ENCODE measurements at regions of chr10 and their contacts with region 1.

Region 1: GRCh38 chr10:123132576-123133477 is 2.9 kb upstream of the HMX3 start:
- DNase-seq: peak; percentile 63 to 84 (median 79)
- ATAC-seq: peak; percentile 85
- H3K4me3 ChIP-seq: peak overlapping the region; percentile 36
- H3K4me3 Mint-ChIP-seq: peak overlapping the region; percentile 39 to 79 (median 72)
- H3K27ac ChIP-seq: no peak overlapping the region
- H3K27ac Mint-ChIP-seq: peak overlapping the region in 4 of 9 donors; percentile 5 to 82 (median 42)
- H3K4me1 ChIP-seq: peaks cover 20 to 42% of the 10 kb centered on the region in 2 donors
- H3K4me1 Mint-ChIP-seq: peaks cover 6 to 32% (median 26%) of the 10 kb centered on the region in 7 donors
- H3K27me3 ChIP-seq: peaks cover 16 to 37% of the 10 kb centered on the region in 2 donors
- H3K27me3 Mint-ChIP-seq: peaks cover 62 to 82% (median 68%) of the 10 kb centered on the region in 5 donors

Region 2: GRCh38 chr10:122648599-122649428 is 484.0 kb before region 1 on chr10:
- CTCF ChIA-PET with region 1: no interaction called
- POLR2A ChIA-PET with region 1: no interaction called
- intact Hi-C with region 1: loop called in 1 of 2 experiments (anchors 5 kb)
- DNase-seq: peak in 1 of 9 donors; percentile 9
- ATAC-seq: peak; percentile 32
- H3K4me3 ChIP-seq: no peak overlapping the region
- H3K4me3 Mint-ChIP-seq: no peak overlapping the region
- H3K27ac ChIP-seq: no peak overlapping the region
- H3K27ac Mint-ChIP-seq: no peak overlapping the region
- H3K4me1 ChIP-seq: no peaks in the 10 kb centered on the region
- H3K4me1 Mint-ChIP-seq: no peaks in the 10 kb centered on the region
- H3K27me3 ChIP-seq: no peaks in the 10 kb centered on the region
- H3K27me3 Mint-ChIP-seq: peaks cover 14 to 49% (median 16%) of the 10 kb centered on the region in 5 donors

Region 3: GRCh38 chr10:123043409-123043925 is 89.4 kb before region 1 on chr10:
- CTCF ChIA-PET with region 1: interaction called, 5 read pairs
- POLR2A ChIA-PET with region 1: no interaction called
- intact Hi-C with region 1: loop called (anchors 1 kb)
- DNase-seq: peak in 8 of 9 donors; percentile 11 to 50 (median 36)
- ATAC-seq: peak; percentile 70
- H3K4me3 ChIP-seq: no peak overlapping the region
- H3K4me3 Mint-ChIP-seq: no peak overlapping the region
- H3K27ac ChIP-seq: no peak overlapping the region
- H3K27ac Mint-ChIP-seq: no peak overlapping the region
- H3K4me1 ChIP-seq: no peaks in the 10 kb centered on the region
- H3K4me1 Mint-ChIP-seq: peaks cover 0 to 10% (median 6%) of the 10 kb centered on the region in 7 donors
- H3K27me3 ChIP-seq: no peaks in the 10 kb centered on the region
- H3K27me3 Mint-ChIP-seq: no peaks in the 10 kb centered on the region

Region 4: GRCh38 chr10:123147635-123148413 is 15.0 kb after region 1 on chr10 and contains the start of gene HMX2:
- CTCF ChIA-PET with region 1: interaction called, 3 read pairs
- POLR2A ChIA-PET with region 1: interaction called, 3 read pairs
- intact Hi-C with region 1: loop called (anchors 1 kb)
- DNase-seq: peak in 2 of 9 donors; percentile 37 to 40
- ATAC-seq: peak; percentile 30
- H3K4me3 ChIP-seq: peak within 1 kb of the TSS; percentile 52
- H3K4me3 Mint-ChIP-seq: peak within 1 kb of the TSS; percentile 62 to 91 (median 89)
- H3K27ac ChIP-seq: no peak within 1 kb of the TSS
- H3K27ac Mint-ChIP-seq: peak within 1 kb of the TSS in 5 of 9 donors; percentile 15 to 66 (median 43)
- H3K4me1 ChIP-seq: peaks cover 33 to 79% of the 10 kb centered on the region in 2 donors
- H3K4me1 Mint-ChIP-seq: peaks cover 25 to 77% (median 62%) of the 10 kb centered on the region in 7 donors
- H3K27me3 ChIP-seq: peaks cover 25 to 48% of the 10 kb centered on the region in 2 donors
- H3K27me3 Mint-ChIP-seq: peaks cover 50 to 82% (median 54%) of the 10 kb centered on the region in 5 donors
- total RNA-seq, gene HMX2: not detected

Region 5: GRCh38 chr10:123165445-123166072 is 32.7 kb after region 1 on chr10:
- CTCF ChIA-PET with region 1: no interaction called
- POLR2A ChIA-PET with region 1: no interaction called
- intact Hi-C with region 1: no loop called
- DNase-seq: no peak
- ATAC-seq: no peak
- H3K4me3 ChIP-seq: no peak overlapping the region
- H3K4me3 Mint-ChIP-seq: no peak overlapping the region
- H3K27ac ChIP-seq: no peak overlapping the region
- H3K27ac Mint-ChIP-seq: peak overlapping the region in 4 of 9 donors; percentile 14 to 50 (median 35)
- H3K4me1 ChIP-seq: peaks cover 13 to 16% of the 10 kb centered on the region in 2 donors
- H3K4me1 Mint-ChIP-seq: peaks cover 8 to 56% (median 40%) of the 10 kb centered on the region in 7 donors
- H3K27me3 ChIP-seq: no peaks in the 10 kb centered on the region
- H3K27me3 Mint-ChIP-seq: no peaks in the 10 kb centered on the region

Region 6: DNA sequence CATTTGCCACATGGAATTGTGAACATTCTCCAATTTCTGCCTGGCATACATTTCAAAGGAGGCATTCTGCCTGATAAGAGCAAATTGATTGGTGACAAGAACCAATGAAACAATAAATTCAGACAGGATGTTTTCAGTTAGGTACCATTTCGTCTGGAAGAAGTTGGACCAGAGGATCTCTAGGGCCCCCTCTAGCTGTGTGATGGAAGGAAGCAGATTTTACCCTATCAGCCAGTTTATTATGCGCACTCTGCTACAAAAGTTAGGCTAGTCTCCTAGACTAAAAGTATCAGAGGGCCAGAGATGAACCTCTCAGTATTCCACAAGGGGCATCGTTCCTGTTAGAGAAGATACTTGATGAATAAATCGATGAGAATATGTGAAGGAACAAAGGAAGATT is 139.3 kb after region 1 on chr10:
- CTCF ChIA-PET with region 1: interaction called, 5 read pairs
- POLR2A ChIA-PET with region 1: no interaction called
- intact Hi-C with region 1: loop called (anchors 1 to 10 kb)
- DNase-seq: peak in 5 of 9 donors; percentile 7 to 31 (median 15)
- ATAC-seq: no peak
- H3K4me3 ChIP-seq: no peak overlapping the region
- H3K4me3 Mint-ChIP-seq: no peak overlapping the region
- H3K27ac ChIP-seq: no peak overlapping the region
- H3K27ac Mint-ChIP-seq: peak overlapping the region in 1 of 9 donors; percentile 7
- H3K4me1 ChIP-seq: no peaks in the 10 kb centered on the region
- H3K4me1 Mint-ChIP-seq: peaks cover 0 to 11% (median 5%) of the 10 kb centered on the region in 7 donors
- H3K27me3 ChIP-seq: peaks cover 0 to 11% of the 10 kb centered on the region in 2 donors
- H3K27me3 Mint-ChIP-seq: peaks cover 17 to 31% (median 24%) of the 10 kb centered on the region in 5 donors

Region 7: DNA sequence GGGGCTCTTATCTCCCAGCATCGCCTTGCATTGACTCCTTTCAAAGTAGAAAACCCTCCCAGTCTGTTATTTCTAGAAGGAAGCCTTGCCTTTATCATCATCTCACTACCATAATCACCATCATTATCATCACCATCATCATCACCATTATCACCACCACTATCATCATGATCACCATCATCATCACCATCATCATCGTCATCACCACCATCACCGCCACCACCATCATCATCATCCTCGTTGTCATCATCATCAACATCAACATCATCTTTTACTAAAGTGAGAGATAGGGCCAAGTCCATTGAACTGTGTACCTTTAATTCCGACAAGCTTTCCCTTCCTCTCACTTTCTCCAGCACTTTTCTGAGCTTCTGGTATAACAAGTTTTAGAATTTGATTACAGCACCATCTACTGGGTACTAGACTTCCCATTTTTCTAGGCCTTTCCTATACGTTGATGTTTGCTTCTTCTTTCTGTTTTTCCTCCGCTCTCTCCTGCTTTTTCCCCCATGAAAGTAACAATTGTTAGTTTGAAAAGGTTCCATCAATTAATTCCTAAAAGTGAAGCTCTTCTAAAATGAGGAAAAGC is 247.8 kb after region 1 on chr10:
- CTCF ChIA-PET with region 1: interaction called, 8 read pairs
- POLR2A ChIA-PET with region 1: no interaction called
- intact Hi-C with region 1: loop called (anchors 1 kb)
- DNase-seq: peak in 3 of 9 donors; percentile 6 to 13 (median 10)
- ATAC-seq: no peak
- H3K4me3 ChIP-seq: no peak overlapping the region
- H3K4me3 Mint-ChIP-seq: no peak overlapping the region
- H3K27ac ChIP-seq: no peak overlapping the region
- H3K27ac Mint-ChIP-seq: no peak overlapping the region
- H3K4me1 ChIP-seq: no peaks in the 10 kb centered on the region
- H3K4me1 Mint-ChIP-seq: peaks cover 0 to 3% (median 0%) of the 10 kb centered on the region in 7 donors
- H3K27me3 ChIP-seq: no peaks in the 10 kb centered on the region
- H3K27me3 Mint-ChIP-seq: peaks cover 0 to 25% (median 5%) of the 10 kb centered on the region in 5 donors

Region 8: DNA sequence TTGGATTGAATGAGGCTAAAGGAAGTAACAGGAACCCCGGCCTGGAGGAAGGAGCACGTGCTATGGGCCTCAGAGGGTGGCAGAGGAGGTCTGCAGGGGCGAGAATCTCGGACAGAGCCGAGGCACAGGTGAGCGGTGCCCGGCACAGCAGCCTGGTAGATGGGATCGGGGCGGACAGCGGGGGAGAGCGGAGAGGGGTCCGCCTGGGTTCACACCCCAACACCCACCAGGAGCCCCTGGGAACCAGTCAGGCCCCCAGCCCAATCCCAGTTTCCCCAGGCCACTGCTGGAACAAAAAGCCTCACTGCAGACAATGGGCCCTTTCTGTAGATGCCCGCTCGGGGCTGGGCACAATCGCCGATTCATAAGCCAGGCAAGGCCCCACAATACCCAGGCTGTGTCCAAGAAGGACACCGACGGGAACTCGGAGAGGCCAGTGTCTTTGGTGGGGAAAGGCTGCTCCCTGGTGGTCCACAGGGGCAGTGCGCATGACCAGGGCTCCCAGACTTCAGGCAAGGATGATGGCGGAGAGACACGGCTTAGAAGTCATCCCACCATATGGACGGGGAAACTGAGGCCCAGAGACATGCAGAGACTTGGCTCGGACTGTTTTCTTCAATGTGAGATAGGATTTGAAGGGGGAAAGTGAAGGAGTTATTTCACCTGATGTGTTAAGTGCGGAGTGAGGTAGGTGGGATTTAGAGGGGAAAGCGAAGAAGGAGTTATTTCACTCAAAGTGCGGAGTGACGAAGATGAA is 426.4 kb after region 1 on chr10:
- CTCF ChIA-PET with region 1: interaction called, 10 read pairs
- POLR2A ChIA-PET with region 1: interaction called, 3 read pairs
- intact Hi-C with region 1: loop called in 1 of 2 experiments (anchors 1 kb)
- DNase-seq: peak; percentile 31 to 76 (median 49)
- ATAC-seq: peak; percentile 78
- H3K4me3 ChIP-seq: no peak overlapping the region
- H3K4me3 Mint-ChIP-seq: no peak overlapping the region
- H3K27ac ChIP-seq: no peak overlapping the region
- H3K27ac Mint-ChIP-seq: peak overlapping the region in 1 of 9 donors; percentile 20
- H3K4me1 ChIP-seq: no peaks in the 10 kb centered on the region
- H3K4me1 Mint-ChIP-seq: peaks cover 0 to 6% (median 0%) of the 10 kb centered on the region in 7 donors
- H3K27me3 ChIP-seq: no peaks in the 10 kb centered on the region
- H3K27me3 Mint-ChIP-seq: peaks cover 3 to 23% (median 20%) of the 10 kb centered on the region in 5 donors